PC-9 (cell line): ENCODE measurements at regions of chr1 and their contacts with region 1.

Region 1: DNA sequence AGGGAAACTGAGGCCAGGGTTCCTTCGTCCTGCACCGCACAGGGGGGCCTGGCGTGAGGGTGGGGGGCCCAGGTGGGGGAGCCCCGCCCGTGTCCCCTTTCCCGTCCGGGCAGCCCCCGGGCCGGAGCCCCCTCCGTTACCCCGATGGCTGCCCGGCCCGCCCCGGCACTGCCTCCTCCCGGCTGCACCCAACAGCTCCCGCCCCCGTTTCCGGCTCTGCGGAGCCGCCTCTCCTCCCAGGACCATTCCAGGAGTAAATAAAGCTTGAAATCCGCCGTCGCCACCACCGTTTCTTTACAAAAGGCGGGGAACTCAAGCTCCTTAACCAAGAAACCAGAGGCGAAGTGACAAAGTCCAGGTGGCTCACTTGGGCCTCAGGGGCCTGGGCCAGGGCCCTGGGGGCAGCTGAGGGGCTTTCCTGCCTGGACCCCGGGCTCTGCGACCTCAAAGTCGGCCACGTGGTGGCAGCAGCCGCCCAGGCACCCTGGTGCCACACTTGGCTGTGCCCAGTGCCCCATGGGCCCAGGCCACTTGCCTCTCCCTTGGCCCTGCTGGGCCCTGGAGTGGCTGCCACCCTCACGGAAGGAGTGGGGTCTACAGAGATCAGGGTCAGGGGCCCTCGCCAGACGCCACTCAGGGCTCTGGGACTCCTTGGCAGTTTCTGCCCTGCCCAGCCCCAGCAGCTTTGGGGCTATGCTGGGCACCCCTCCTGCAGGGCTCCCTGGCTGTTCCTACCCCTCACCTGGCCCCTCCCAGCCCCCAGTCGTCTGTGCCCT is 514 bp upstream of the FAAP20 start:
- DNase-seq: peak; percentile 63 to 90
- H3K4me3 ChIP-seq: peak overlapping the region; percentile 60
- H3K27ac ChIP-seq: no peak overlapping the region
- H3K4me1 ChIP-seq: peaks cover 4% of the 10 kb centered on the region
- H3K27me3 ChIP-seq: no peaks in the 10 kb centered on the region
- CTCF ChIP-seq: peak; percentile 93

Region 2: GRCh38 chr1:2233997-2234761 is 39.1 kb after region 1 on chr1:
- CTCF ChIA-PET with region 1: interaction called, 4 read pairs
- POLR2A ChIA-PET with region 1: interaction called, 10 read pairs
- intact Hi-C with region 1: loop called (anchors 5 kb)
- DNase-seq: peak; percentile 73 to 85
- H3K4me3 ChIP-seq: peak overlapping the region; percentile 47; the same call in 1 of the 2 replicates
- H3K27ac ChIP-seq: peak overlapping the region; percentile 68
- H3K4me1 ChIP-seq: peaks cover 52% of the 10 kb centered on the region
- H3K27me3 ChIP-seq: no peaks in the 10 kb centered on the region
- CTCF ChIP-seq: no peak

Region 3: GRCh38 chr1:2372551-2373490 is 177.7 kb after region 1 on chr1:
- CTCF ChIA-PET with region 1: no interaction called
- POLR2A ChIA-PET with region 1: interaction called, 15 read pairs
- intact Hi-C with region 1: no loop called
- DNase-seq: peak; percentile 24 to 40
- H3K4me3 ChIP-seq: no peak overlapping the region
- H3K27ac ChIP-seq: no peak overlapping the region
- H3K4me1 ChIP-seq: no peaks in the 10 kb centered on the region; the same call in 1 of the 2 replicates
- H3K27me3 ChIP-seq: no peaks in the 10 kb centered on the region
- CTCF ChIP-seq: no peak

Region 4: GRCh38 chr1:2381741-2382620 is 186.9 kb after region 1 on chr1:
- CTCF ChIA-PET with region 1: interaction called, 17 read pairs
- POLR2A ChIA-PET with region 1: interaction called, 12 read pairs
- intact Hi-C with region 1: loop called (anchors 1 kb)
- DNase-seq: peak; percentile 47 to 72
- H3K4me3 ChIP-seq: no peak overlapping the region
- H3K27ac ChIP-seq: no peak overlapping the region
- H3K4me1 ChIP-seq: no peaks in the 10 kb centered on the region
- H3K27me3 ChIP-seq: no peaks in the 10 kb centered on the region
- CTCF ChIP-seq: peak; percentile 86

Region 5: GRCh38 chr1:3423245-3423829 is 1228.3 kb after region 1 on chr1:
- CTCF ChIA-PET with region 1: no interaction called
- POLR2A ChIA-PET with region 1: no interaction called
- intact Hi-C with region 1: loop called (anchors 10 kb)
- DNase-seq: no peak
- H3K4me3 ChIP-seq: no peak overlapping the region
- H3K27ac ChIP-seq: no peak overlapping the region
- H3K4me1 ChIP-seq: no peaks in the 10 kb centered on the region
- H3K27me3 ChIP-seq: peaks cover 95% of the 10 kb centered on the region
- CTCF ChIP-seq: no peak